K562 (cell line): ENCODE measurements at regions of chr12 and their contacts with region 1.

Region 1: GRCh38 chr12:71938728-71939385 is at the start of gene TPH2:
- DNase-seq: peak; percentile 75 to 85 (median 82)
- ATAC-seq: peak; percentile 90
- H3K4me3 ChIP-seq: no peak within 1 kb of the TSS
- H3K27ac ChIP-seq: no peak within 1 kb of the TSS
- H3K4me1 ChIP-seq: peaks cover 0 to 7% of the 10 kb centered on the region in 2 experiments; a peak in 2 of 5 replicates
- H3K27me3 ChIP-seq: no peaks in the 10 kb centered on the region
- CTCF ChIP-seq: peak; percentile 84 to 92 (median 85)
- EP300 ChIP-seq: no peak
- POLR2A ChIP-seq: no peak
- RAD21 ChIP-seq: peak; percentile 36 to 87; a peak in 2 of 4 replicates
- polyA plus RNA-seq, gene TPH2: 0.06 to 0.13 TPM

Region 2: GRCh38 chr12:71772735-71773134 is 166.1 kb before region 1 on chr12:
- CTCF ChIA-PET with region 1: no interaction called
- POLR2A ChIA-PET with region 1: no interaction called
- in situ Hi-C with region 1: loop called (anchors 10 kb)
- intact Hi-C with region 1: no loop called
- DNase-seq: no peak
- ATAC-seq: no peak
- H3K4me3 ChIP-seq: no peak overlapping the region
- H3K27ac ChIP-seq: no peak overlapping the region
- H3K4me1 ChIP-seq: no peaks in the 10 kb centered on the region; a peak in 1 of 5 replicates
- H3K27me3 ChIP-seq: no peaks in the 10 kb centered on the region
- CTCF ChIP-seq: no peak
- EP300 ChIP-seq: no peak
- POLR2A ChIP-seq: no peak
- RAD21 ChIP-seq: no peak

Region 3: GRCh38 chr12:71780237-71780822 is 158.5 kb before region 1 on chr12:
- CTCF ChIA-PET with region 1: interaction called, 8 read pairs
- POLR2A ChIA-PET with region 1: no interaction called
- in situ Hi-C with region 1: loop called (anchors 10 kb)
- intact Hi-C with region 1: loop called (anchors 1 kb)
- DNase-seq: peak; percentile 27 to 62 (median 32)
- ATAC-seq: peak; percentile 83
- H3K4me3 ChIP-seq: no peak overlapping the region
- H3K27ac ChIP-seq: no peak overlapping the region
- H3K4me1 ChIP-seq: no peaks in the 10 kb centered on the region
- H3K27me3 ChIP-seq: no peaks in the 10 kb centered on the region
- CTCF ChIP-seq: peak; percentile 55 to 73 (median 70); a peak in 5 of 6 replicates
- EP300 ChIP-seq: no peak
- POLR2A ChIP-seq: no peak
- RAD21 ChIP-seq: peak; percentile 70 to 82

Region 4: GRCh38 chr12:71840231-71840847 is 98.5 kb before region 1 on chr12:
- CTCF ChIA-PET with region 1: no interaction called
- POLR2A ChIA-PET with region 1: no interaction called
- in situ Hi-C with region 1: no loop called
- intact Hi-C with region 1: loop called (anchors 5 kb)
- DNase-seq: peak; percentile 48 to 57 (median 55)
- ATAC-seq: peak; percentile 60
- H3K4me3 ChIP-seq: peak overlapping the region; percentile 69
- H3K27ac ChIP-seq: peak overlapping the region; percentile 94
- H3K4me1 ChIP-seq: peaks cover 10 to 16% of the 10 kb centered on the region in 2 experiments; a peak in 4 of 5 replicates
- H3K27me3 ChIP-seq: no peaks in the 10 kb centered on the region
- CTCF ChIP-seq: no peak
- EP300 ChIP-seq: no peak
- POLR2A ChIP-seq: no peak
- RAD21 ChIP-seq: no peak

Region 5: DNA sequence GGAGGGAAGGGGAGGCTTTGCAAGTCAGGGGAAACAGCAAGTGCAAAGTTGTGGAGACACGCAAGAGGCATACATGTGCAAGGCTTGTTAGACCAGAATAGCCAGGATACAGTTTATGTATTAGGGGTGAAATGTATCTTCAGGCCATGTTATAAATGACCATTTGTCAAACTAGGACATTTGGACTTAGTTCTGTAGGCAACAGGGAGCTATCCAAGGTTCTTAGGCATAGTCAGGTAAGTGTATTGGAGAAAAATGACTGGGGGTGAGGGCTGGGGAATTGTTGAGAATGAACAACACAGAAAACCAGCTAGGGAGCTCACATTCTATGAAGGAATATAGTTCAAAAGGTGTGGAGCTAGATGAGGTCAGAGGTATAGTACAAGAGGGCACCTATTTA is 42.3 kb after region 1 on chr12:
- CTCF ChIA-PET with region 1: no interaction called
- POLR2A ChIA-PET with region 1: no interaction called
- in situ Hi-C with region 1: no loop called
- intact Hi-C with region 1: no loop called
- DNase-seq: no peak
- ATAC-seq: no peak
- H3K4me3 ChIP-seq: no peak overlapping the region
- H3K27ac ChIP-seq: no peak overlapping the region
- H3K4me1 ChIP-seq: no peaks in the 10 kb centered on the region; a peak in 1 of 5 replicates
- H3K27me3 ChIP-seq: no peaks in the 10 kb centered on the region
- CTCF ChIP-seq: no peak
- EP300 ChIP-seq: no peak
- POLR2A ChIP-seq: no peak
- RAD21 ChIP-seq: no peak

Region 6: GRCh38 chr12:72191761-72192160 is 252.9 kb after region 1 on chr12:
- CTCF ChIA-PET with region 1: no interaction called
- POLR2A ChIA-PET with region 1: no interaction called
- in situ Hi-C with region 1: no loop called
- intact Hi-C with region 1: no loop called
- DNase-seq: no peak
- ATAC-seq: no peak
- H3K4me3 ChIP-seq: no peak overlapping the region
- H3K27ac ChIP-seq: no peak overlapping the region
- H3K4me1 ChIP-seq: no peaks in the 10 kb centered on the region
- H3K27me3 ChIP-seq: no peaks in the 10 kb centered on the region
- CTCF ChIP-seq: no peak
- EP300 ChIP-seq: no peak
- POLR2A ChIP-seq: no peak
- RAD21 ChIP-seq: no peak

Region 7: DNA sequence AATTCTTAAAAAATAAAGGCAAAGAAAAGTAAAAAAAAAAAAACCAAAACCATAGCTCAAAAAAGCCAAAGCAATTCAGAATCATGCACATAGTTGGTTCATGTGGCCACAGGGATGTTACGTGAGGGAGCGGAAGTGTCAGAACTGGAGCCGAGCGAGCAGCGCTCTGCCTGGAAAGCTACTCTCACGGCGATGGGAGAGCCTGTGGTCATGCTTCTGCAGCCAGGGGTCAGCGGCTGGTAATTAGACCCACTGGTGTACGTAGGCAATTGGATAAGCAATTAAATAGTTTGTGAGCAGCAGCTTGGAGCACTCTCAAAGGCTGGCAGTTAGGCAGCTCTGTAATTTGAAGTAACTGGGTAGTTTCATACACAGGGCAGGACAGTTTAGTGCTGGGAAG is 391.4 kb after region 1 on chr12:
- CTCF ChIA-PET with region 1: no interaction called
- POLR2A ChIA-PET with region 1: no interaction called
- in situ Hi-C with region 1: no loop called
- intact Hi-C with region 1: no loop called
- DNase-seq: no peak
- ATAC-seq: no peak
- H3K4me3 ChIP-seq: no peak overlapping the region
- H3K27ac ChIP-seq: no peak overlapping the region
- H3K4me1 ChIP-seq: no peaks in the 10 kb centered on the region
- H3K27me3 ChIP-seq: no peaks in the 10 kb centered on the region
- CTCF ChIP-seq: no peak
- EP300 ChIP-seq: no peak
- POLR2A ChIP-seq: no peak
- RAD21 ChIP-seq: no peak